ENCODE measurements at regions of chr5 and their contacts with region 1.

Region 1: DNA sequence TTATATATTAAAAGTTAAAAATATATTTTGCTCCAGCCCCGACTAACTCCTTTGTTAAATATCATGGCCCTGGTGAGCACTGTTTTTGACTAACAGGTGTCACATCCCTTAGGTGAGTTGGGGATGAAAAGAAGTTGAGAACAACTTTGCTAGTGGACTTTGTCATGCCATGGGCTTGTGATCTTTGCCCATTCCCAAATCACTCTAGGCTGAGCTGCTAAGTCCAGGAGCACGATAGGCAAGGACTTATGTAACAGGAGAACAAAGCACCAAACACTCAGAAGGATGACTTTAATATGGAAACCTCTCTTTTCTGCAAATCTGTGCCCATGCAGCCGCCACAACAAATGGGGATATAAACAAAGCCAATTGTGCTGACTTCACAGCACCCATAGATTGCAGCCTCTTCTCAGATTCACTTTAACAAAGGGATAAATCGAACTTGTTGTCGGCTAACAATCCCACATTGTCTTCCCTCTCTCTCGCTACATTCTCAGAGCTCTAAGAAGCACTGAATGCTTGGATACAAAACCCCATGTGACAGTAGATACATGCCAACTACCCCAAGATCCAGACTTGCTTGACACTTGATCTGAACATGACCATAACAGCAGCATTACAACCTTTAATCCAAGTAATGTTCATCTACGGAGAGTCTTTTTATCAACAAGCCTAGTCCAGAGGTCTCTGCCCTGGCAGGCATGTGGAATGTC is 86.8 kb upstream of the CD180 start:
- DNase-seq: peak; percentile 22
- H3K4me3 ChIP-seq: no peak overlapping the region
- H3K27ac ChIP-seq: no peak overlapping the region
- H3K4me1 ChIP-seq: peaks cover 10% of the 10 kb centered on the region
- H3K27me3 ChIP-seq: no peaks in the 10 kb centered on the region
- CTCF ChIP-seq: no peak

Region 2: GRCh38 chr5:67301285-67301903 is 18.0 kb after region 1 on chr5:
- CTCF ChIA-PET with region 1: no interaction called
- dilution Hi-C with region 1: no loop called
- in situ Hi-C with region 1: no loop called
- intact Hi-C with region 1: loop called (anchors 1 kb)
- DNase-seq: peak; percentile 89
- H3K4me3 ChIP-seq: no peak overlapping the region
- H3K27ac ChIP-seq: peak overlapping the region; percentile 67
- H3K4me1 ChIP-seq: peaks cover 47% of the 10 kb centered on the region
- H3K27me3 ChIP-seq: no peaks in the 10 kb centered on the region
- CTCF ChIP-seq: no peak

Region 3: DNA sequence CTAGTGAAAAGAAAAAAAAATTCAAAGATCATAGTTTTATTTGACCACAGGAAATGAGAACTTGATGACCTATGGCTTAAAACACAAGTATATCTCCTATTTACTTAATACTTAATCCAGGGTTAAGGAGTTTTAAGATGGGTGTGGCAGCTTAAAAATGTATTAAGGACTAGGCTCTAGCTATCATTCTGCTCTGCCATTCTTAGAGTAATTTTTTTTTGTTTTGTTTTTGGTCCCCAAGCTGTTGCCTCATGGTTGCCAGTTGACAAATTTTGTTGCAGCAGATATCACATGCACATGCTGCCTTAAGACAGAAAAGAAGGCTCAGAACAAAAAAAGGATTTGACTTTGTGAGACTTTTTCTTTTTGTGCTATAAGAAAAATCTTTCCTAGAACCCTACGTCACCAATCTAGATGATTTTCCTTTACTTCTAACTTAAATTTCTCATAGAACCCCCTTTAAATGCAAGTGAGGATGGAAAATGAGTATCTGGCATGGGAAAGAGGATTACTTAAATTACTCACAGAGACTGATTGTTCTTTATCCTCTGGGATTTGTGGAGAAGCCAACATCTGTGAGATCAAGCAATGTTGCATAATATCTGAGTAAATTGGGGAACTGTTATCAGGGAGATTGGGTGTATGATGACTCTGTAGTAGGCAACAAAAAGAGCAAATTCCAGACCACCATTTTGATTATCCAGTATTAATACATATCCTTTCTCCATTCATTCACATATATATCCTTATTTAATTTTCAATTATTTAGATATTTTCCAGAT is 277.9 kb after region 1 on chr5:
- CTCF ChIA-PET with region 1: no interaction called
- dilution Hi-C with region 1: no loop called
- in situ Hi-C with region 1: no loop called
- intact Hi-C with region 1: no loop called
- DNase-seq: no peak
- H3K4me3 ChIP-seq: no peak overlapping the region
- H3K27ac ChIP-seq: no peak overlapping the region
- H3K4me1 ChIP-seq: no peaks in the 10 kb centered on the region
- H3K27me3 ChIP-seq: no peaks in the 10 kb centered on the region
- CTCF ChIP-seq: no peak